Activated CD8-positive, alpha-beta memory T cell treated with anti-CD3 and anti-CD28 coated beads, Interleukin-2, amount 10 ng/mL, durations not matched to agents 7 days and 5 days (primary cell): ENCODE measurements at regions of chr6 and their contacts with region 1.

Region 1: GRCh38 chr6:20126789-20127653 is 85.2 kb downstream of the MBOAT1 start:
- DNase-seq: peak; percentile 72
- ATAC-seq: peak; percentile 84
- H3K4me3 Mint-ChIP-seq: no peak overlapping the region
- H3K27ac Mint-ChIP-seq: no peak overlapping the region
- H3K4me1 Mint-ChIP-seq: peaks cover 5% of the 10 kb centered on the region
- H3K27me3 Mint-ChIP-seq: no peaks in the 10 kb centered on the region

Region 2: GRCh38 chr6:20038410-20039204 is 88.4 kb before region 1 on chr6:
- CTCF ChIA-PET with region 1: no interaction called
- DNase-seq: no peak
- ATAC-seq: no peak
- H3K4me3 Mint-ChIP-seq: no peak overlapping the region
- H3K27ac Mint-ChIP-seq: no peak overlapping the region
- H3K4me1 Mint-ChIP-seq: peaks cover 1% of the 10 kb centered on the region
- H3K27me3 Mint-ChIP-seq: peaks cover 4% of the 10 kb centered on the region

Region 3: DNA sequence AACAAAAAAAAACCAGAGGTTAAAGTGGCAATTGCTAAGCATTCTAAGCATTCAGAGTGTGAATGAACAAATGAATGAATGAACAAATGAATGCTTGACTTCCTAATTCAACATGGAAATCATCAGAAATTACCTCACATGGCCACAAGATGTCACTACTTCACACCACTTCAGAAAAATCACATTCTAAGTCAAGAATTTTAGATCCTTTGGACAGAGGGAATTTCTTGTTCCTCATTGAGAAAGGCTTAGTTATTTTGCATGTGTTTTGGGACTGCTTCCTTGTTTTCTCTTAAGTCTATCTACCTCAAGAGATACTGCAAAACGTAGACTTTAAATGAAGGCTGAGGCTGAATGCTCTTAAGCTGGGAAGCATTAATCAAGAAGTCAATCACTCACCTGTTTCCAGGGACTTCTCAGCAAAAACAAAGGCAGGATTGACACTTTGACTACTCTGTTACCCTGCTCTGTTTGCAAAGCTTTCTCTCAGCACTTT is 34.9 kb before region 1 on chr6:
- CTCF ChIA-PET with region 1: interaction called, 10 read pairs
- DNase-seq: no peak
- ATAC-seq: no peak
- H3K4me3 Mint-ChIP-seq: no peak overlapping the region
- H3K27ac Mint-ChIP-seq: no peak overlapping the region
- H3K4me1 Mint-ChIP-seq: no peaks in the 10 kb centered on the region
- H3K27me3 Mint-ChIP-seq: peaks cover 3% of the 10 kb centered on the region

Region 4: DNA sequence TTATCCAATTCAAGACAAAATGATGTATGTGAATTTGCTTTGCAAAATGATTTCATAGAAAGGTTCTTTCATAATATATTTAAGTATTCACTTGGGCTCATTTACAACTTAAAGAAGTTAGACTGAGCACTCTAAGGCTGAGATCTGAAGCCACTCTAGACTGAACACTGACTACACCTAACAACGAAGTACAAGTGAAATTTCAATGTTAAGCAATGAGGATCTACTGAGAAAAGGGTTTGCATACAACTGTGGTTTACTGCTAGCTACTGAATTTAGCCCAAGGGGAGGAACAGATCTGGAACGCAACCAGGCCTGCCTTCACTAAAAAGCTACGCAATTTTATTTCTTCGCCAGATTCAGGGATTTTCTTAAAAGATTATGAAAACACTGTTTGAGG is 21.2 kb before region 1 on chr6:
- CTCF ChIA-PET with region 1: interaction called, 11 read pairs
- DNase-seq: no peak
- ATAC-seq: no peak
- H3K4me3 Mint-ChIP-seq: no peak overlapping the region
- H3K27ac Mint-ChIP-seq: no peak overlapping the region
- H3K4me1 Mint-ChIP-seq: no peaks in the 10 kb centered on the region
- H3K27me3 Mint-ChIP-seq: no peaks in the 10 kb centered on the region

Region 5: GRCh38 chr6:20141931-20142330 is 14.9 kb after region 1 on chr6:
- CTCF ChIA-PET with region 1: interaction called, 18 read pairs
- DNase-seq: no peak
- ATAC-seq: no peak
- H3K4me3 Mint-ChIP-seq: no peak overlapping the region
- H3K27ac Mint-ChIP-seq: no peak overlapping the region
- H3K4me1 Mint-ChIP-seq: no peaks in the 10 kb centered on the region
- H3K27me3 Mint-ChIP-seq: no peaks in the 10 kb centered on the region

Region 6: DNA sequence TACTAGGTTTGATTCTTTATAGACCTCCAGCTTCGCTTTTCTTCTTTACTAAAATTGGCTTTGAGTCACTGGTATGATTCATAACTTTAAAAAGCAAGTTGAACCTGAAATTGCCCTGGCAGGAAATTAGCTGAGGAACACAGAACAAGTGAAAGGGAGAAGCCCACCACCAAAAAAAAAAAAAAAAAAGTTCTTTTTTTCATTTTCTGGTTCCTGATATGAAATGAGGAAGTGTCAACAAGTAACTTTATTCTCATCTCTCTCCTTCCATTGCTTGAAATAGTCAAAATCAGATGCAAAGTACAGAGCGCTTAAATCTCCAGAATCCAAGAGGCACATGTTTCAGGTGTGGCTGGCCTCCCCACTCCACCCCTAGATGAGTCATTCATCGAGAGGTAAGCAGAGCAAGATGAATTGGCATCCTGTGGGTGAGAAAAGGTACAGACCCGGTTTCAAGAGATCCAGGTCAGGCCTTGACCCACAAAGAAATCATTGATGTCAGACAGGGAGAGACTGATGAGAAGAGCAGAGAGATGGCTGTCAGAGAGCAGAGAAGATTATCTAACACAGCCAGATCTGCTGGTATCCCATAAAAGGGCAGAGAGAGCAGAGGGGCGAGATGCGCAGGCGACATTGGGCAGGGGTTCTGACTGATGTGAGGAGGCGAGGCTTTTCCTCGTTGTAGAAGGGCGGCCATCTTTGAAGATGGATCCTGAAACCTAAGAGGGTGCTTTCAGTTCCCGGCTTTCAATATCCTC is 140.0 kb after region 1 on chr6:
- CTCF ChIA-PET with region 1: no interaction called
- DNase-seq: no peak
- ATAC-seq: no peak
- H3K4me3 Mint-ChIP-seq: no peak overlapping the region
- H3K27ac Mint-ChIP-seq: no peak overlapping the region
- H3K4me1 Mint-ChIP-seq: peaks cover 5% of the 10 kb centered on the region
- H3K27me3 Mint-ChIP-seq: peaks cover 16% of the 10 kb centered on the region